ENCODE measurements at regions of chr12 and their contacts with region 1.

Region 1: DNA sequence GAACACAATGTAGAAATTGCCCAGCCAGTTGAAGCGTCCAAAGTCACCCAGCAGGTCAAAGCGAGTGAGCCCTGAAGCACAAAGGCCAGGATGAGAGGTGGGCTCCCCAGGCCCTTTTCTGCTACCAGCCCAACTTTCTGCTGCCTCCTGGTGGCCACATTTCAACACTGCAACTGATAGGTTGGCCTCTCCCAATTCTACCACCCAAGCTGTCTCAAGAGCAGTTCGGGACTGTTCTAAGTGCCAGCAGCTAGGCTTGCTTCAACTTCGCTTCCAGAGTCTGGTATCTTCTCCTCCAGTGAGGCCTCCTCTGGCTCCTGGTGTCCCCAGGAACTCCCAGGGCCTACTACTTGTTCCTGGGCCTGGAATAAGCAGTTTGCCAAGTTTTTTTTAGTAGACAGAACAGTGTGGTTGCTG is 3.4 kb upstream of the DHH start:
- DNase-seq: peak; percentile 78

Region 2: GRCh38 chr12:49110464-49111155 is 12.6 kb after region 1 on chr12 and contains the start of gene LMBR1L:
- CTCF ChIA-PET with region 1: interaction called, 13 read pairs
- POLR2A ChIA-PET with region 1: interaction called, 19 read pairs
- DNase-seq: peak; percentile 98

Region 3: DNA sequence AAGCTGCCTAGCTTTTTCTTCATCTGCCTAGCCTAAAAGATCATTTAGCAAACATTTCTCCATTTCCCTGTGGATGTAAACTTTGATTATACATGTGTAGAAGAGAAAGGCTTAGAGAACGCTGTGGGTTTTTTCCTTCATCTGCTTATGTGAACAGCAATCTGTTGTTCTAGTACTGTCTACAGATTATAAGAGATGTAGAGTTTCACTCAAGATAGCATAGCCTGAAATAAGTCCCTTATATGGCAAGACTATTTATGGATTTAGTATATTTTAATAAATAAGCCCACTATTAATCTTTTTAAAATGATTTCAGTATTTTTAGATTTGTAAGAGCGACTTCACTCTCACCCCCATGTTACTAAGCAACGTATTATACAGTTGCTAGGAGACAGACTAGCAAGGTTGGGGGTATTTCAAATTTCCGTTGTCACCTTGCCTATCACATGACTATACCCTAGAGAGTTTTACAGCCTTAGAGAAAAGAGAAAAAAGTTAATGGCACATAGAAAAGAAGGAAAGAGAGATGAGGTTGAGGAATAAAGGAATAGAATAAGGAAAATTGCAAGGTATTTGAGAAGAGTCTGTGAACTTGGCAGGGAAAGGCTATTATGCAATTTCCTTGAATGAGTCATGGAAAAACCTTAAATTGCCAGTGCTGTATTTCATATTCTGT is 103.0 kb after region 1 on chr12:
- CTCF ChIA-PET with region 1: no interaction called
- POLR2A ChIA-PET with region 1: no interaction called
- DNase-seq: no peak

Measured in HEK293T (cell line).